ENCODE measurements at regions of chr18 and their contacts with region 1.

Region 1: GRCh38 chr18:9069601-9070000 is 32.9 kb upstream of the NDUFV2 start:
- DNase-seq: no peak
- H3K4me3 ChIP-seq: no peak overlapping the region
- H3K27ac ChIP-seq: no peak overlapping the region
- H3K4me1 ChIP-seq: peaks cover 0 to 11% (median 4%) of the 10 kb centered on the region in 4 donors
- H3K27me3 ChIP-seq: no peaks in the 10 kb centered on the region
- CTCF ChIP-seq: no peak
- EP300 ChIP-seq: no peak
- POLR2A ChIP-seq: no peak

Region 2: DNA sequence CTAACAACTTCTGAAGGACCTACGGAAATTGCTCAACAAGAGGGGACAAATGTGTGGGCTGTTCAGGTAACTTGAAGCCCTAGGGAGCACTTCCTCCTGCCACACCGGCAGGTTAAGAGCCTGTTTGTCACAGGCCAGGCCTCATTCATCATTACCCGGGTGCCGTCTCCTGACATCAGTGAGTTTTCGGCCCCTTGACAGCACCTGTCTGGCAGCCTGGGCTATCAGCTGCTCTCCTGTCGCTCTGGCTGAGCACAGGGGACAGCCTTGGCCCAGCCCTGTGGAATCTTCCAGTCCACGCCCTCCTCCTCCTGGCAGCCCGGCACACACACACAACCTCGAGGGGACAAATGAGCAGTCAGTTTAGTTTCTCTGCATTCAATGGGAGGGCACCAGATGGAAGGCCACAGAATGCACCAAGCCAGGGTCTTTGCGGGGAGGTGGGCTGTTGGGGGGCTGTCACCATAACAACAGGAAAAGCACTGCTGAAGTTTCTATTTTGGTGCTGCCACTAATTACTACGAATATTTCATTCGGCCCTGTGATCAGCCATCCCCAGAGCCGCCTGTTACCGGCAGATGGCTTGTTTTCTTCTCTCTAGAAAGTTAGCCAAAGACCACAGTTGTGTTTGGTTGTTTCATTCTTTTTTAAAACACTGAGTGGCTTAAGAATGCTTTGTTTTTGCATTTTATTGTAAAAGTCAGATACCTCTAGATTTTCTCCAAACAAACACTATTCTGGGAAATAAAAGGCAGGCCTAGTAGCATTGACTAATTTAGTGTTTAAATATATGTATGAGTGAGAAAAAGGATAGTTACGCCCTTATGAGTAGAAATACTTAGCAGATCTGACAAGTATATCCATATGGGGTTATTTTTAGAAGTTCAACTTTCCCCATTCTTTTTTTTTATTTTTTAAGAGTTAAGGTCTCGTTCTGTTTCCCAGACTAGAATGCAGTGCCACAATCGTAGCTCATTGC is 157.0 kb before region 1 on chr18:
- intact Hi-C with region 1: no loop called
- DNase-seq: no peak
- H3K4me3 ChIP-seq: no peak overlapping the region
- H3K27ac ChIP-seq: peak overlapping the region in 1 of 4 donors; percentile 7
- H3K4me1 ChIP-seq: peaks cover 0 to 9% (median 7%) of the 10 kb centered on the region in 4 donors
- H3K27me3 ChIP-seq: no peaks in the 10 kb centered on the region
- CTCF ChIP-seq: no peak
- EP300 ChIP-seq: no peak
- POLR2A ChIP-seq: no peak

Region 3: GRCh38 chr18:9147440-9148202 is 78.0 kb after region 1 on chr18:
- intact Hi-C with region 1: loop called (anchors 1 kb)
- DNase-seq: no peak
- H3K4me3 ChIP-seq: no peak overlapping the region
- H3K27ac ChIP-seq: peak overlapping the region in 3 of 4 donors; percentile 14 to 44 (median 42)
- H3K4me1 ChIP-seq: peaks cover 0 to 98% (median 70%) of the 10 kb centered on the region in 4 donors
- H3K27me3 ChIP-seq: no peaks in the 10 kb centered on the region
- CTCF ChIP-seq: peak; percentile 54 to 76 (median 70)
- EP300 ChIP-seq: no peak
- POLR2A ChIP-seq: no peak

Region 4: GRCh38 chr18:9334329-9334972 is 264.9 kb after region 1 on chr18 and contains the start of gene TWSG1:
- intact Hi-C with region 1: loop called (anchors 5 kb)
- DNase-seq: peak; percentile 98
- H3K4me3 ChIP-seq: peak within 1 kb of the TSS; percentile 76 to 98 (median 94)
- H3K27ac ChIP-seq: peak within 1 kb of the TSS; percentile 96 to 99 (median 97)
- H3K4me1 ChIP-seq: peaks cover 0 to 34% (median 19%) of the 10 kb centered on the region in 4 donors
- H3K27me3 ChIP-seq: no peaks in the 10 kb centered on the region
- CTCF ChIP-seq: peak in 2 of 4 experiments; percentile 9 to 52
- EP300 ChIP-seq: no peak
- POLR2A ChIP-seq: peak; percentile 32 to 41
- total RNA-seq, gene TWSG1: 69.2 to 88.3 (median 79.1) TPM

Region 5: GRCh38 chr18:9516437-9517064 is 446.9 kb after region 1 on chr18:
- intact Hi-C with region 1: loop called (anchors 5 kb)
- DNase-seq: no peak
- H3K4me3 ChIP-seq: no peak overlapping the region
- H3K27ac ChIP-seq: peak overlapping the region in 2 of 4 donors; percentile 33 to 60
- H3K4me1 ChIP-seq: peaks cover 0 to 36% (median 15%) of the 10 kb centered on the region in 4 donors
- H3K27me3 ChIP-seq: no peaks in the 10 kb centered on the region
- CTCF ChIP-seq: peak; percentile 59 to 84 (median 78)
- EP300 ChIP-seq: no peak
- POLR2A ChIP-seq: no peak